ENCODE measurements at regions of chr12 and their contacts with region 1.

Region 1: DNA sequence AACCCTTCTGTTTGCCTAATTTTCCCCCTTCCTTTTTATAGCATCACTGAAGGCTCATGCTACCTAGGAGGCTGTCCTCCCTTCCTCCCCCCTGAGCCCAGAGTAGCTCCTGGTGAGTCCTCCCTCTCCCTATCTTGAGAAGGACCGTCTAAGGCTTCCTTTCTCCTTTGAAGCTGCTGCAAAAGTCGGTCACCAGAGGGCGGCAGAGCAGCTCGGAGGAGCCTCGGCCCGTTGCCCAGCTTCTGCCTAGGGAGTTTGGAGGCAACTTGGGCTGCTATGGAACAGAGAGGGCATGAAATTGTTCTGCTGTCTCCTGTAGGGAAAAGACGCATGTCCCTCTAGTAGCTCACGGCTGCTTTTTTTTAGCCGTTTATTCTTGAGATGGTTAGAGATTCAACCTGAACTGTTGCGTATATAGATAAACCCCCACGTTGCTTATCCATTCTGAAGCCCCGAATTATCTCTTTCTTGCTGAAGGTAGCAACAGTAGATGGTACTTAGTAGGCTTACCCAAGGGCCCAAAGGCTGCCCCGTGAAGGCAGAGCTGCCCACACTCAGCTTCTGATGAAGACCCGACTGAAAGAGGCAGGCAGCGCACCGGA is 5.7 kb downstream of the WNT5B start:
- DNase-seq: peak; percentile 77
- H3K4me3 Mint-ChIP-seq: no peak overlapping the region
- H3K27ac Mint-ChIP-seq: no peak overlapping the region
- H3K4me1 Mint-ChIP-seq: peaks cover 5% of the 10 kb centered on the region
- H3K27me3 Mint-ChIP-seq: peaks cover under 1% of the 10 kb centered on the region
- CTCF ChIP-seq: peak; percentile 78

Region 2: GRCh38 chr12:1605129-1606020 is 29.3 kb before region 1 on chr12:
- CTCF ChIA-PET with region 1: interaction called, 6 read pairs
- POLR2A ChIA-PET with region 1: interaction called, 11 read pairs
- intact Hi-C with region 1: no loop called
- DNase-seq: peak; percentile 83
- H3K4me3 Mint-ChIP-seq: peak overlapping the region; percentile 77
- H3K27ac Mint-ChIP-seq: peak overlapping the region; percentile 86
- H3K4me1 Mint-ChIP-seq: peaks cover 26% of the 10 kb centered on the region
- H3K27me3 Mint-ChIP-seq: no peaks in the 10 kb centered on the region
- CTCF ChIP-seq: peak; percentile 78

Region 3: GRCh38 chr12:1611803-1612572 is 22.7 kb before region 1 on chr12:
- CTCF ChIA-PET with region 1: interaction called, 12 read pairs
- POLR2A ChIA-PET with region 1: no interaction called
- intact Hi-C with region 1: no loop called
- DNase-seq: no peak
- H3K4me3 Mint-ChIP-seq: no peak overlapping the region
- H3K27ac Mint-ChIP-seq: no peak overlapping the region
- H3K4me1 Mint-ChIP-seq: peaks cover 4% of the 10 kb centered on the region
- H3K27me3 Mint-ChIP-seq: no peaks in the 10 kb centered on the region
- CTCF ChIP-seq: no peak

Region 4: GRCh38 chr12:1644534-1645438 is 10.1 kb after region 1 on chr12:
- CTCF ChIA-PET with region 1: interaction called, 139 read pairs
- POLR2A ChIA-PET with region 1: interaction called, 3 read pairs
- intact Hi-C with region 1: no loop called
- DNase-seq: peak; percentile 32
- H3K4me3 Mint-ChIP-seq: no peak overlapping the region
- H3K27ac Mint-ChIP-seq: no peak overlapping the region
- H3K4me1 Mint-ChIP-seq: no peaks in the 10 kb centered on the region
- H3K27me3 Mint-ChIP-seq: no peaks in the 10 kb centered on the region
- CTCF ChIP-seq: no peak

Region 5: DNA sequence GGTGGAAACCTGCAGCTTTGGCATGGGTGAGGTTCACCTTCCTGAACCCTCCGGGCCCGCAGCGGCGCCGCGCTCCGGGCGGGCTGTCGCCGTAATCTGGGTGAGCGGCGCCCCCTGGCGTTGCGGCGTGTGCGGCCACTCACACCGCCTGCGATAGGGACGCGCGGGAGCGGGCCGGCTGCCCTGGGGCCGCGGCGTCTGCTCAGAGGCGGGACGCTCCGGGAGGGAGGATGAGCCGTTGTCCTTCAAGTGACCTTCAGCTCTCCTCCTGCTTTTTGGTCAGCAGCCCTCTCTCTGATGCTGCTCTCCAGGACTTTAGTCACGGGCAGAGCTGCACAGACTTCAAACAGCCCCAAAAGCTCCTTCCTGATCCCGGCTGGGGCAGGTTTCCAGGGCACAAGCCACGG is 948.4 kb after region 1 on chr12:
- CTCF ChIA-PET with region 1: no interaction called
- POLR2A ChIA-PET with region 1: no interaction called
- intact Hi-C with region 1: loop called (anchors 10 kb)
- DNase-seq: peak; percentile 53
- H3K4me3 Mint-ChIP-seq: no peak overlapping the region
- H3K27ac Mint-ChIP-seq: no peak overlapping the region
- H3K4me1 Mint-ChIP-seq: no peaks in the 10 kb centered on the region
- H3K27me3 Mint-ChIP-seq: peaks cover 70% of the 10 kb centered on the region
- CTCF ChIP-seq: peak; percentile 94